Activated CD4-positive, alpha-beta memory T cell treated with anti-CD3 and anti-CD28 coated beads for 36 hours (primary cell): ENCODE measurements at regions of chr3 and their contacts with region 1.

Region 1: DNA sequence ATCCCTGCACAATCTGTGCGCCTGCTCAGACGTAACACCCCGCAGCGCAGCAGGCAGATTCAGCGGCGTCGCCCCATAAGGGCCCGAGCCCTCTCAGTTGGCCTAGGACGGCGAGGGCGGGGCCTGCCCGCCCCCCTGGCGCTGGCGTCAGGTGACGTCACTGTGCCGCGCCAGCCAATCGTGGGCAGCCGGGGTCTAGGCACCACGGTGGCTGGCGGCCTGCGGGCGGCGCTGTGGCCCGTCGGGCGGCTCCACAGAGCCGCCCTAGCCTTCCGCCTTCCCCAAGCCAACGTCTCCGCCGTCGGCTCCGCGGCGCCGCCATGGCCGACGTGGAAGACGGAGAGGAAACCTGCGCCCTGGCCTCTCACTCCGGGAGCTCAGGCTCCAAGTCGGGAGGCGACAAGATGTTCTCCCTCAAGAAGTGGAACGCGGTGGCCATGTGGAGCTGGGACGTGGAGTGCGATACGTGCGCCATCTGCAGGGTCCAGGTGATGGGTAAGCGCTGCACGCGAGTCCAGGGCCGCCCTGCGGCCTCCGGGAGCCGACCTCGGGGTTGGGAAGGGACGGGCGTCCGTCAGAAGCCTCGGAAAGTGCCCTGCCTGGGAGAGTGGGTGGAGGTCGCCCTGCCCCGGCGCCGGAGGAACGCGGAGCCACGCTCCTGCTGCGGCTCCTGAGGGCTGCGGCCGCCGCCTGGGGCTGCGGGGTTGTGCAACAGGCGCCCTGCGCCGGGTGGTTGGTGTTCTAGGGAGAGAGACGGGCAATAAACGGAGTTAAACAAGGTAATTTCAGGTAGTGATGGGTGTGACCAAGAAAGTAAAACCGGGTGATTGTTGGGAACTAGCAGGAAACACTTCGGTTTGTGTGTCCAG is at the start of gene RNF7:
- DNase-seq: peak; percentile 98
- H3K4me3 Mint-ChIP-seq: peak within 1 kb of the TSS; percentile 100
- H3K27ac Mint-ChIP-seq: peak within 1 kb of the TSS; percentile 99
- H3K4me1 Mint-ChIP-seq: peaks cover 33% of the 10 kb centered on the region
- H3K27me3 Mint-ChIP-seq: no peaks in the 10 kb centered on the region
- total RNA-seq, gene RNF7: 54.0 to 58.9 TPM

Region 2: DNA sequence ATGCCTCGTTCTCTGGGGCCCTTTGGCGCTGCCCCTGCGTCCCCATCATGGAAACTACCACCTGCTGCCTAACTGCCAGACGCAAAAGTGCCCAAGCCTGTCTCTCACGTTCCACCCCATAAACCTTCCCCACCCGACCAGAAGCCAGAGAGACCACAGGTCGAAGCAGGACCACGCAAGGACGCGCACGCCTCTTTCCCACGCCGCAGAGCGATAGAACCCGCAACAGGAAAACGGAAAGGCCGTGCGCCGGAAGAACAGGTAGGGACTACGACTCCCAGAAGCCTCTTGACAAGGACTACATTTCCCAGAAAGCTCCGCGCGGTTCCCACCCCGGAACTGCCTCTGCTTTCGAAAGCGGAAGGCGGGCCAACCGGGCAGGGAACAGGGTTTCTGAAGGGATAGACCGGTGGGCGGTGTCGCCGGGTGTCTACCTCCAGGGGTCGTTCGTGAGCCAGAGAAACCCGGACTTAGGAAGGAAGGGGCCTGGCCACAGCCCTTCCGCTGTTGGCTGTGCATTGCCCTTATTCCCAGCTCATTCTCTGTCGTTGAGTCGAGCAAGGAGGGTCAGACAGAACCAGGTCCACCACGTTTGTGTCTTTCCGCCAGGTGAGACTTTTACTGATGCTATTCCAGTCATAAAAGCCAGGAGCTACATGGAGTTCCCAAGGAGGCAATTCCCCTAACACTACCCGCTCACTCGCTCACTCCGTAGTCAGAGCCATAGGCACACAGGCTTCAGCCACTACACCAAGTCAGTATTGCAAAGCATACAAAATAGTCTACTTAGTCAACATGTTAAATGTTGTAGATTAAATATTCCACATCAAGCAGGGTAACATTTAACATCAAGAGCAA is 426.5 kb before region 1 on chr3:
- CTCF ChIA-PET with region 1: no interaction called
- POLR2A ChIA-PET with region 1: no interaction called
- intact Hi-C with region 1: loop called (anchors 1 kb)
- DNase-seq: peak; percentile 100
- H3K4me3 Mint-ChIP-seq: peak overlapping the region; percentile 89
- H3K27ac Mint-ChIP-seq: peak overlapping the region; percentile 90
- H3K4me1 Mint-ChIP-seq: peaks cover 49% of the 10 kb centered on the region
- H3K27me3 Mint-ChIP-seq: no peaks in the 10 kb centered on the region

Region 3: DNA sequence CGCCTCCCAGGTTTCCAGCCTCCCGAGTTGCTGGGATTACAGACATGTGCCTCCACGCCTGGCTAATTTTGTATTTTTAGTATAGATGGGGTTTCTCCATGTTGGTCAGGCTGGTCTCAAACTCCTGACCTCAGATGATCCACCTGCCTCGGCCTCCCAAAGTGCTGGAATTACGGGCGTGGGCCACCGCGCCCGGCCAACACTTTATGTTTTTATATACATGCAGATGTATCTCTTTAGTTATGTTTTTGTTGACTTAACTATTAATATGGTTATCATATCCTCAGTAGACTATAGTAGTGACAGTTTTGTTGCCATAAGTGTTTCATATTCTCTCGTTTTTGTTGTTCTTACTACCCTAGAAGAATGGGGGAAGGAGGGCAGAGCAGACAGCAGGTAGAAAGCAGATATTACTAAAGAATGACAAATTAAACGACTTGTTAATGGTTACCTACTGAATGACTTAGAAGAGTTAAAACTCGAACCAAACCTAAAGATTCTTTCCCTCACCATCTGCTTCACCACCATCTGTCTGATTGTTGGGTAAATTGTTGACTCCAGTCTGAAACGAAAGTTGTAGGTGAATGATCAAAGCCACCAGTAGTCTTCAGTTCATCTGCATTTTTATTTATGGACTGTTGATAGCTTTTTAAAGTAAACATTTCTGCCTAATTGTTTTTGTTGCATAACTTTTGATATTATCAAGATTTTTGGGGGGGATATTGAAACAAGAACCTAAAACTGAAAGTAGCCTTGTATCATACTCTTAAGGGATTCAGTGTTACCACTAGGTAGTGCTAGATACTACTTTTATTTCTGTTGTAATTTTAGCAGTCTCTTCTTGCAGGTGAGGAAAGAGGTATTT is 162.1 kb before region 1 on chr3:
- CTCF ChIA-PET with region 1: no interaction called
- POLR2A ChIA-PET with region 1: no interaction called
- intact Hi-C with region 1: loop called (anchors 5 kb)
- DNase-seq: no peak
- H3K4me3 Mint-ChIP-seq: peak overlapping the region; percentile 5
- H3K27ac Mint-ChIP-seq: peak overlapping the region; percentile 53
- H3K4me1 Mint-ChIP-seq: peaks cover 15% of the 10 kb centered on the region
- H3K27me3 Mint-ChIP-seq: no peaks in the 10 kb centered on the region

Region 4: DNA sequence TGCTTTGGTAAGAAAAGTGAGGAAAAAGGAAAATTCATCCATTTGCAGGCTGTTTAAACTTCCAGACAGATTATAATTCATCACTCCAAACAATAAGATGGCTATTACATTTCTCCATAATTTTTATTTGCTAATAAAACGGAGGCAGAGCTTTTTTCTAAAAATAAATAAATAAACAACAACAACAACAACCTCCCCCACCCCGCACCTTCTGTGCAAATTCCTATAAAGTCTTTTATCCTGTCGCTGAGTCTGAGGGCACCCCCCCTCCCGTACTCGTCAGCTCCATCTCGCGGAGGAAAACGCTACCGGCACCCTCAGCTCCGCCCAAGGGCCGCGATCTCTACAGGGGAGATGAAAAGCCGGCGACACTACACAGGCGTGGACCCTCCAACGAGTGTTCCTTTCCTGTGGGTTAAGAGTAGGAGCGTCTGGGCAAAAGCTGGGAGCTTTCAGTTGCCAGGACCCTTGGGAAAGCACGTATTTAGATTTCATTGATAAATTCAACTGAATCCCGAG is 137.2 kb after region 1 on chr3:
- CTCF ChIA-PET with region 1: interaction called, 110 read pairs
- POLR2A ChIA-PET with region 1: interaction called, 56 read pairs
- intact Hi-C with region 1: loop called (anchors 1 kb)
- DNase-seq: peak; percentile 91
- H3K4me3 Mint-ChIP-seq: peak overlapping the region; percentile 88
- H3K27ac Mint-ChIP-seq: peak overlapping the region; percentile 92
- H3K4me1 Mint-ChIP-seq: peaks cover 32% of the 10 kb centered on the region
- H3K27me3 Mint-ChIP-seq: no peaks in the 10 kb centered on the region

Region 5: GRCh38 chr3:141913150-141913811 is 175.0 kb after region 1 on chr3:
- CTCF ChIA-PET with region 1: interaction called, 45 read pairs
- POLR2A ChIA-PET with region 1: no interaction called
- intact Hi-C with region 1: loop called (anchors 1 kb)
- DNase-seq: peak; percentile 63
- H3K4me3 Mint-ChIP-seq: no peak overlapping the region
- H3K27ac Mint-ChIP-seq: no peak overlapping the region
- H3K4me1 Mint-ChIP-seq: peaks cover 5% of the 10 kb centered on the region
- H3K27me3 Mint-ChIP-seq: no peaks in the 10 kb centered on the region

Region 6: DNA sequence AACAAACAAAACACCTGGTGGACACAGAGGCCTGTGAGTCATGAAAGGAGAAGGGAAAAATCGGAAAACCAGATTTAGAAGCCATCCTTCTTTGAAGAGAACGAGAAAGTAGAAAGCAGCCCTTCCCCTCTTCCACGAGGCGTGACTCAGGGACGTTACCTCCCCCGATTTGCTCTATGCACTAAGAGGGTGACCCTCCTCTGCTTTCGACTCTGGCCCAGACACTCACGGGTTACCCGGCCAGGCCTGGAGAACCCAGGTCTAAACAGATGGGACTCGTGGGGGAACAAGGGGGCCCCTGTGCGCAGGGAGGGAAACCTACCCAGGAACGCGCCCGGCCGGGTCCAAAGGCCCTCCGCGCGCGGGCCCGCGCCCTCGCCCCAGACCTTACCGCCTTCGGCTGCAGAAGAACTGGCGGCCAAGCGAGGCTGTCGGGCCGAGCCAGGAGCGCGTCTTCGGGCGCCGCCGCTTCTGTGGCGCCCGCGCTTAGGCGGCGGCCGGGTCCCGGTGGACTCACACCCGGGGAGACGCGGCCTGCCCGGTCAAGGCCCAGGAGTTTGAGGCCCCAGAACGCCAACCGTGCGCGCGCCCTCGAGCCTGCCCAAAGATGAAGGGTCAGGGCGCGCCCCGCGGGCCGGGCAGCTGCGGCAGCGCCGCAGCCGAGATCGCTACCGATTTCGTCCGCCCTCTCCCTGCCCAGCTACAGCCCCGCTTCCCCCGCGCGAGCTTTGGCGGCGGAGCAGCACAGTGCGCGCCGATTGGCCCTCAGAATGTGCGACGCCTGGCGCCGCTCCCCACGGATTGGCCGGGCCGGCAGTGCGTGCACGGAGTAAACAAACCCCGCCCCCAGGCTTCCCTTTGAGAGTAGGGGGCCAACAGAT is 410.8 kb after region 1 on chr3 and contains the start of gene TFDP2:
- CTCF ChIA-PET with region 1: interaction called, 3 read pairs
- POLR2A ChIA-PET with region 1: no interaction called
- intact Hi-C with region 1: loop called (anchors 5 kb)
- DNase-seq: peak; percentile 90
- H3K4me3 Mint-ChIP-seq: peak within 1 kb of the TSS; percentile 79
- H3K27ac Mint-ChIP-seq: no peak within 1 kb of the TSS
- H3K4me1 Mint-ChIP-seq: peaks cover 26% of the 10 kb centered on the region
- H3K27me3 Mint-ChIP-seq: no peaks in the 10 kb centered on the region
- total RNA-seq, gene TFDP2: 19.1 to 21.5 TPM

Region 7: GRCh38 chr3:142270407-142270806 is 532.2 kb after region 1 on chr3:
- CTCF ChIA-PET with region 1: no interaction called
- POLR2A ChIA-PET with region 1: no interaction called
- intact Hi-C with region 1: loop called (anchors 5 kb)
- DNase-seq: peak; percentile 36
- H3K4me3 Mint-ChIP-seq: no peak overlapping the region
- H3K27ac Mint-ChIP-seq: no peak overlapping the region
- H3K4me1 Mint-ChIP-seq: peaks cover 6% of the 10 kb centered on the region
- H3K27me3 Mint-ChIP-seq: no peaks in the 10 kb centered on the region